Transverse colon (tissue), 4 donors: ENCODE measurements at regions of chr5 and their contacts with region 1.

Region 1: DNA sequence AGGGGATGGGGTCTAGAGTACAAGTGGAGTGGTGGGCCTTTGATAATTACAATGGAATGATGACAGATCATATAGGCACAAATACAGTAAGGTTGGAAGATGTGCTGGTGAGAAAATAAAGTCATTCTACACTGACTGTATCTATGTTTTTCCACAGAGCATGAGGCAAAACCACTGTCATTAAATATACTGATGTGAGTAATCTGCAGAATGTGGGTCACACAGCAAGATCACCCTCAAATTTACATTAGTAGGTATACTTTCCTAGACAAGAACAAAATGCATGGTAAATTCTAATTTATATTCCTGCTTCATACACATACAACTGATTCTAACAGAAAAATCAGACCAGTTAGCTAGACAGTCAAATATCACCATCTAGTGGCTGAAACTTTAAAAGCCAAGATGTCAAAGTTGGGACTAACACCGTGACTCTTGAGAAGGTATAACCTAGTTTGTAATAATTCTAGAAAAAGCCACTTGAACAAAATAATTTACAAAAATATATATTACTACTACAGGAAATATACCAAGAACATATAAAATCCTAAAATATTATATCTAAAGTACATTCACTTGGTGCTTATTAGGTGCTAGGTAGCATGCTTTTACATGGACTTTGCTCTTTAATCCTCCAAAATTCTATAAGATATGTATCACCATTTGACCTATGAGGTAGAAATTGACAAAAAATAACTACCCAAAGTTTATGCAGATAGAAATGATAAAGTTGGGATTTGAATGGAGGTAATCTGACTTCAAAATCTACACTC is 19.5 kb downstream of the TTC33 start:
- DNase-seq: no peak
- H3K4me3 ChIP-seq: no peak overlapping the region
- H3K27ac ChIP-seq: peak overlapping the region in 2 of 4 donors; percentile 61 to 76
- H3K4me1 ChIP-seq: peaks cover 22 to 48% (median 31%) of the 10 kb centered on the region in 4 donors
- H3K27me3 ChIP-seq: no peaks in the 10 kb centered on the region
- CTCF ChIP-seq: peak; percentile 70 to 83 (median 73)
- EP300 ChIP-seq: no peak
- POLR2A ChIP-seq: no peak

Region 2: DNA sequence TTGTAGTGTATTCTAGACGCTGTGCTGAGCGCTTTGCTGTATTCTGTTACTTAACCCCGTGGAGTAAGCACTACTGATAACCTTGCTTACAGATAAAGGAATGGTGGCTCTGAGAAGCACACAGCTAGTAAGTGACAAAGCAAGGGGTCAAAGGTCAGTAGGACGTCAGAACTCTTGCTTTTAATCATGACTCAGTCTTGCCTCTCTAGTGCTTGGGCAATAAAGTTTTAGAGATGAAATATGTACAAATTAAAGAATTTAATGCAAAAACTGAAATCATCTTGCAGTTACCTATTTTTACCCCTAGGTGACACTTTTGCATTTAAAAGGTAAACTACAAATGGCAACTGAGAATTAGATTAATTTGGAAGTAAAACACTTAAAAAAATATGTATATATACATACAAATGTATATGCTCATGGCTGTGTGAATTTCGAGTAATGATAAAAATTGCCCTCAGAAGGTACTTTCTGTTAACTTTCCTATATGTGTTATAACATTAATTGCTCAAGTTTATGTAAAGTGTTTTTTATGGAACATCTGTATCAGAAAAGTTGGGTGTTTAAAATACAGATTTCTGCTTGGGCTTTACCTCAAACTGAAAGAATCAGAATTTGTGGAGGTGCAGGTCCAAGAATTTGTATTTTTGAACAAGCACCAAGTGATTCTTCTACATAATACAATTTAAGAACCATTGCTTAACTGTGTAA is 1136.4 kb before region 1 on chr5:
- in situ Hi-C with region 1: loop called in 3 of 4 experiments (anchors 25 kb)
- intact Hi-C with region 1: no loop called
- DNase-seq: no peak
- H3K4me3 ChIP-seq: no peak overlapping the region
- H3K27ac ChIP-seq: no peak overlapping the region
- H3K4me1 ChIP-seq: peaks cover 0 to 11% (median 5%) of the 10 kb centered on the region in 4 donors
- H3K27me3 ChIP-seq: peaks cover 4% of the 10 kb centered on the region
- CTCF ChIP-seq: peak; percentile 52 to 70 (median 58)
- EP300 ChIP-seq: no peak
- POLR2A ChIP-seq: no peak

Region 3: GRCh38 chr5:39714036-39714698 is 1022.1 kb before region 1 on chr5:
- in situ Hi-C with region 1: loop called (anchors 25 kb)
- intact Hi-C with region 1: loop called (anchors 10 kb)
- DNase-seq: peak; percentile 49
- H3K4me3 ChIP-seq: no peak overlapping the region
- H3K27ac ChIP-seq: peak overlapping the region in 3 of 4 donors; percentile 25 to 35 (median 33)
- H3K4me1 ChIP-seq: peaks cover 0 to 12% (median 0%) of the 10 kb centered on the region in 4 donors
- H3K27me3 ChIP-seq: no peaks in the 10 kb centered on the region
- CTCF ChIP-seq: peak; percentile 59 to 71 (median 70)
- EP300 ChIP-seq: no peak
- POLR2A ChIP-seq: no peak